Activated CD4-positive, alpha-beta memory T cell treated with anti-CD3 and anti-CD28 coated beads for 36 hours (primary cell): ENCODE measurements at regions of chr2 and their contacts with region 1.

Region 1: GRCh38 chr2:101308432-101309210 is at the start of gene RNF149:
- DNase-seq: peak; percentile 92
- H3K4me3 Mint-ChIP-seq: peak within 1 kb of the TSS; percentile 98
- H3K27ac Mint-ChIP-seq: peak within 1 kb of the TSS; percentile 97
- H3K4me1 Mint-ChIP-seq: peaks cover 65% of the 10 kb centered on the region
- H3K27me3 Mint-ChIP-seq: no peaks in the 10 kb centered on the region
- total RNA-seq, gene RNF149: 42.1 to 46.9 TPM

Region 2: GRCh38 chr2:101001691-101002561 is 306.7 kb before region 1 on chr2 and contains the start of gene RPL31:
- CTCF ChIA-PET with region 1: no interaction called
- POLR2A ChIA-PET with region 1: no interaction called
- intact Hi-C with region 1: loop called (anchors 5 kb)
- DNase-seq: peak; percentile 98
- H3K4me3 Mint-ChIP-seq: peak within 1 kb of the TSS; percentile 90
- H3K27ac Mint-ChIP-seq: peak within 1 kb of the TSS; percentile 87
- H3K4me1 Mint-ChIP-seq: peaks cover 40% of the 10 kb centered on the region
- H3K27me3 Mint-ChIP-seq: no peaks in the 10 kb centered on the region
- total RNA-seq, gene RPL31: 1,809 to 1,825 TPM

Region 3: DNA sequence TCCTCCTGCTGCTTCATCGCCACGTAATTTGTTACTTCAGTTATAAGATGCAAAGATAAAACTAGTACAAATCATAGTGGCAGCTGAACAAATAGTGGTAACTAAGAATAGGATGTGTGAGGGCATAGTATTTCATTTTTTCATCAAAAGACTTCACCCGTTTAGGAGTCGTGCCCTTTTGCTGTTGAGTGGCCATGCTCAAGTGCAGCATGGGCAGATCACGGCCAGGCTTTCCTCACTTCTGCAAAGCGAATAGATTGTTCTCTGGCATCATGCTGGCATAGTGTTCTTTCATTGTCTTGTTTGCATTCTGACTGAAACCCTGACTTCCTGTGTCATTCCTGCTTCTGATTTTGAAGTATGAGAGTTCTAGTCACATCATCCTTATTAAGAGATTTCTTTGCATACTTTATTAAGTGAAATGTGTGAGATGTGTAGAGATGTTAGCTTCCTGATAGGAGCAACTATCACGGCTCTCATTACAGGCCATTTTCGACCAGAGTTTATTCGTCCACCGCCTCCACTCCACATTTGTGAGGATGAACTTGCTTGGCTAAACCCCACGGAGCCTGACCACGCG is 44.2 kb before region 1 on chr2:
- CTCF ChIA-PET with region 1: no interaction called
- POLR2A ChIA-PET with region 1: interaction called, 4 read pairs
- intact Hi-C with region 1: loop called (anchors 2 kb)
- DNase-seq: no peak
- H3K4me3 Mint-ChIP-seq: no peak overlapping the region
- H3K27ac Mint-ChIP-seq: peak overlapping the region; percentile 23
- H3K4me1 Mint-ChIP-seq: peaks cover 47% of the 10 kb centered on the region
- H3K27me3 Mint-ChIP-seq: no peaks in the 10 kb centered on the region

Region 4: DNA sequence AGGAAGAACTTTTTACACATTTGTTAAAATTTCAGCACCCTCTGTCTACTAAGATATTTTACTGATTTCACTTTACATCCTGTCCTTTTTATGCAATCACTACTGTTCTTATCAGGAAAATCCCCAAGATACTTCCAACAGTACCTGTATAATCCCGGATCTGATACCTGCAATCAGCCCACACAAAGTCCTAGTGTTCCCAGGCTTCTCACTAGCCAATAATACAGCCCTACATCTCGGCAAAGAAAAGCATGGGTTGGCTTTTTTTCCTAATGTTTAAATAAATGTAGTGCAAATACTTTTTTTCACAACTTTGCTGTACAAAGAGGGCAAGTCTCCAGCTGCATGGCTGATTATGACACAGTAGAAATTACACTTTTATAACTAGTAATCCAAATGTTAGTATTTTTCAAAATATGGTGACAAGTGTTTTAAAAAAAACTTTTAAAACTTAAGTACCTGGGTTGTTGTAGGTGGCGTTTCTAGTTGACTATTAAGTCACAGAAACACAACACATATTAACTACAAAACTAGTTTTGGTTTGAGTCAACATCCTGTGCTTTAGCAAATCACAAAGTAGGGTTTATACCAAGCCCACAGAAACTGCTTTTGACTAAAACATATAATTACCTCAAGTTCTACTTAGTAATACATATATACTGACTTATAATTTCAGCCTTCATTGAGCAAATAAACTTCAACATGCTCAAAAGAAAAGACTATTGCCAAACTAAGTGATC is 36.4 kb before region 1 on chr2:
- CTCF ChIA-PET with region 1: no interaction called
- POLR2A ChIA-PET with region 1: interaction called, 4 read pairs
- intact Hi-C with region 1: loop called (anchors 1 kb)
- DNase-seq: no peak
- H3K4me3 Mint-ChIP-seq: no peak overlapping the region
- H3K27ac Mint-ChIP-seq: peak overlapping the region; percentile 70
- H3K4me1 Mint-ChIP-seq: peaks cover 46% of the 10 kb centered on the region
- H3K27me3 Mint-ChIP-seq: no peaks in the 10 kb centered on the region

Region 5: DNA sequence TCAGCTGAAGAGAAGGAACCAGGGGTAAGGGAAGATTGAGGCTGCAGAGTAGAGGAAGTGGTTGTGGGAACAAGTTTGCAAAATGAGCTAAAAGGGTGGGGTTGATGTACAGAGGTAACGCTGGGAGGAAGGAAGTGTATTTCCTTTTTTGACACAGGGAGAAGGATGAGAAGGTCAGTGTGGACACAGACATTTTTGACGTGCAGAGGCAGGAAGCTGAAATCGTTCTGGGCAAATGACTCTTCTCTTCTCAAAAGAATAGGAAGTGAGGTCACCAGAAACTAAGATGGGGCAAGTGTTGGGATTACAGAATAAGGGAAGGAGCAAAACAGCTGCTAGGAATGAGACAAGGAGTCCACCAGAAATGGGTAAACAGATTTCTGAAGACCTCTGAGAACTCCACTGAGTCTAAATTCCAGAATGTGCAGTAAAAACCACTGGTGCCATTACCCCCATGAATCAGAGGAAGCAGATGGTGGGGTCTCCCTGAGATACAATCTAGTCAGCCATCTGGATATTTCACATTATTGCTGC is 19.9 kb after region 1 on chr2:
- CTCF ChIA-PET with region 1: interaction called, 4 read pairs
- POLR2A ChIA-PET with region 1: interaction called, 10 read pairs
- intact Hi-C with region 1: loop called (anchors 1 kb)
- DNase-seq: peak; percentile 57
- H3K4me3 Mint-ChIP-seq: no peak overlapping the region
- H3K27ac Mint-ChIP-seq: no peak overlapping the region
- H3K4me1 Mint-ChIP-seq: peaks cover 38% of the 10 kb centered on the region
- H3K27me3 Mint-ChIP-seq: no peaks in the 10 kb centered on the region